ENCODE measurements at regions of chr17 and their contacts with region 1.

Region 1: GRCh38 chr17:5237541-5238016 is 2.9 kb upstream of the SCIMP start:
- DNase-seq: peak; percentile 82
- ATAC-seq: peak; percentile 91
- H3K4me3 ChIP-seq: no peak overlapping the region
- H3K27ac ChIP-seq: no peak overlapping the region
- H3K4me1 ChIP-seq: no peaks in the 10 kb centered on the region
- H3K27me3 ChIP-seq: no peaks in the 10 kb centered on the region
- CTCF ChIP-seq: peak; percentile 87

Region 2: GRCh38 chr17:5031365-5032082 is 206.1 kb before region 1 on chr17:
- CTCF ChIA-PET with region 1: interaction called, 12 read pairs
- POLR2A ChIA-PET with region 1: no interaction called
- in situ Hi-C with region 1: no loop called
- intact Hi-C with region 1: no loop called
- DNase-seq: peak; percentile 43
- ATAC-seq: peak; percentile 88
- H3K4me3 ChIP-seq: peak overlapping the region; percentile 27 to 54
- H3K27ac ChIP-seq: peak overlapping the region; percentile 70
- H3K4me1 ChIP-seq: no peaks in the 10 kb centered on the region
- H3K27me3 ChIP-seq: no peaks in the 10 kb centered on the region
- CTCF ChIP-seq: peak; percentile 83

Region 3: DNA sequence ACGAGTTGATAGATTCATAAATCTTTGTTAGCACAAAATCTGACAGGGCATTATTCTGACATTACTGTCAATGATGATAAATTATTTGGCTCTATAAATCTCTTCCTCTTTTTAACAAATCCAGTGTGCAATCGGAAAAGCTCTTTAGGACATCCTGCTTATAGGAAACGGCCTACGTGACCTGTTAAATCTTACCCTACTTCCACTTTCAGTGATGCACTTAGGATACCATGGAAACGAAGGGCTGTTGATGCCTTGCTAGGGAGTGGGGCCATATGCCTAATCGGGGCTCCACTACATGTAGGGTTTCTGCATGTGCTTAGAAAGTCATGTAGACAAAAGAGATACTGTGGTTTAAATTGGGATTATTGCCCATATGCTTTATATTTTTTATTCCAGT is 73.1 kb before region 1 on chr17:
- CTCF ChIA-PET with region 1: no interaction called
- POLR2A ChIA-PET with region 1: no interaction called
- in situ Hi-C with region 1: no loop called
- intact Hi-C with region 1: no loop called
- DNase-seq: no peak
- ATAC-seq: no peak
- H3K4me3 ChIP-seq: no peak overlapping the region
- H3K27ac ChIP-seq: no peak overlapping the region
- H3K4me1 ChIP-seq: no peaks in the 10 kb centered on the region
- H3K27me3 ChIP-seq: no peaks in the 10 kb centered on the region
- CTCF ChIP-seq: no peak

Region 4: GRCh38 chr17:5198472-5198871 is 39.1 kb before region 1 on chr17:
- CTCF ChIA-PET with region 1: interaction called, 4 read pairs
- POLR2A ChIA-PET with region 1: no interaction called
- in situ Hi-C with region 1: no loop called
- intact Hi-C with region 1: loop called (anchors 5 kb)
- DNase-seq: no peak
- ATAC-seq: no peak
- H3K4me3 ChIP-seq: no peak overlapping the region
- H3K27ac ChIP-seq: no peak overlapping the region
- H3K4me1 ChIP-seq: peaks cover 1% of the 10 kb centered on the region
- H3K27me3 ChIP-seq: no peaks in the 10 kb centered on the region
- CTCF ChIP-seq: no peak

Region 5: GRCh38 chr17:5226940-5227878 is 10.4 kb before region 1 on chr17:
- CTCF ChIA-PET with region 1: no interaction called
- POLR2A ChIA-PET with region 1: no interaction called
- in situ Hi-C with region 1: no loop called
- intact Hi-C with region 1: no loop called
- DNase-seq: no peak
- ATAC-seq: no peak
- H3K4me3 ChIP-seq: no peak overlapping the region
- H3K27ac ChIP-seq: no peak overlapping the region
- H3K4me1 ChIP-seq: no peaks in the 10 kb centered on the region; the same call in 1 of the 2 replicates
- H3K27me3 ChIP-seq: no peaks in the 10 kb centered on the region
- CTCF ChIP-seq: no peak

Measured in Panc1 (cell line).